Naive thymus-derived CD4-positive, alpha-beta T cell (primary cell): ENCODE measurements at regions of chr7 and their contacts with region 1.

Region 1: GRCh38 chr7:123748734-123749536 is at the start of gene WASL:
- DNase-seq: peak; percentile 82 to 93 (median 89)
- ATAC-seq: peak; percentile 92
- H3K4me3 ChIP-seq: peak within 1 kb of the TSS; percentile 86
- H3K4me3 Mint-ChIP-seq: peak within 1 kb of the TSS; percentile 91 to 99 (median 94)
- H3K27ac ChIP-seq: peak within 1 kb of the TSS; percentile 92
- H3K27ac Mint-ChIP-seq: peak within 1 kb of the TSS; percentile 85 to 97 (median 93)
- H3K4me1 ChIP-seq: peaks cover 18 to 26% of the 10 kb centered on the region in 2 donors
- H3K4me1 Mint-ChIP-seq: peaks cover 44 to 76% (median 69%) of the 10 kb centered on the region in 7 donors
- H3K27me3 ChIP-seq: no peaks in the 10 kb centered on the region
- H3K27me3 Mint-ChIP-seq: peaks cover 0 to 9% (median 0%) of the 10 kb centered on the region in 5 donors
- total RNA-seq, gene WASL: 8.3 to 15.0 (median 10.1) TPM

Region 2: DNA sequence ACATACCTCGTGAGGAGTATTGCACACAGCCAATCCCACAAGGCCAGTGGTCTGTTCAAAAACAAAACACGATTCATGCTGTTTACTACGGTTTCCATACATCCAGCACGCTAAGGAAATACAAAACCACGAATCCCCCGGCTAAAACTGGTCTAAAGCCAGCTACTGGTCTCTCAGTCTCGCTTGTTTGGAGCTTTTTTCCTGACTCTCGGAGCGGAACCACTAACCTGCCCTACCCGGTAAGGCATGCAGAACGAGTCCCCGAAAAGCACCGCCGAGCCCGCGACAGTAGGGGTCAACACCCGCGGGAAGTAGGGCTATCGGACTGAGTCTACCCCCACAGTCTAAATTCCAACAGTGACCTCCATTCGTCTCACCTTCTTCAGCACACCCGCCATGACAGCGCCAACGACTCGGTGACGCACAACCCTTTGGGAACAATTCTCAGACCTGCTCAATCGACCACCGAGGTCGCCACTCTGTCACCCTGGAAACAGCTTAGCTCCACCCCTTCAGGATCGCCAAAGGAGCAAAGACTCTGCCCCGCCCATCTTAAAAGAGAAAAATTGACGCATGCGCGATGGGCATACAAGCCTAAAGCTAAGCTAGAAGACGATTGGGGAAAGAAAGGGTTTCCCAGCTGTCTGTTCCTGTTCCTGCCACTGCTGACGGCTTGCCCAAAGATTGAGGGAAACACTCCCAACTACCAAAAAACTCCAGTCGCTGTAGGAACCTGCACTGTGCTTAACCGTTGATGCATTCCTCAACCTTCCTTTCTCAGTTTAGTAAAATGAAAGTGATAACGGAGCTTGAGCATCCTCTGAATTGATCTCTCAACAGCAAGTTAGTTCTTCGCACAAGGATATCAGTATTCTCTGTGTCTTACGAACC is 191.3 kb before region 1 on chr7 and contains the start of gene NDUFA5:
- CTCF ChIA-PET with region 1: no interaction called
- POLR2A ChIA-PET with region 1: interaction called, 17 read pairs
- intact Hi-C with region 1: loop called (anchors 1 kb)
- DNase-seq: peak; percentile 78 to 99 (median 98)
- ATAC-seq: peak; percentile 100
- H3K4me3 ChIP-seq: peak within 1 kb of the TSS; percentile 95
- H3K4me3 Mint-ChIP-seq: no peak within 1 kb of the TSS
- H3K27ac ChIP-seq: peak within 1 kb of the TSS; percentile 90
- H3K27ac Mint-ChIP-seq: no peak within 1 kb of the TSS
- H3K4me1 ChIP-seq: peaks cover 13 to 15% of the 10 kb centered on the region in 2 donors
- H3K4me1 Mint-ChIP-seq: peaks cover 3 to 16% (median 12%) of the 10 kb centered on the region in 7 donors
- H3K27me3 ChIP-seq: no peaks in the 10 kb centered on the region
- H3K27me3 Mint-ChIP-seq: peaks cover 0 to 6% (median 5%) of the 10 kb centered on the region in 5 donors
- total RNA-seq, gene NDUFA5: 51.2 to 64.1 (median 62.5) TPM

Region 3: DNA sequence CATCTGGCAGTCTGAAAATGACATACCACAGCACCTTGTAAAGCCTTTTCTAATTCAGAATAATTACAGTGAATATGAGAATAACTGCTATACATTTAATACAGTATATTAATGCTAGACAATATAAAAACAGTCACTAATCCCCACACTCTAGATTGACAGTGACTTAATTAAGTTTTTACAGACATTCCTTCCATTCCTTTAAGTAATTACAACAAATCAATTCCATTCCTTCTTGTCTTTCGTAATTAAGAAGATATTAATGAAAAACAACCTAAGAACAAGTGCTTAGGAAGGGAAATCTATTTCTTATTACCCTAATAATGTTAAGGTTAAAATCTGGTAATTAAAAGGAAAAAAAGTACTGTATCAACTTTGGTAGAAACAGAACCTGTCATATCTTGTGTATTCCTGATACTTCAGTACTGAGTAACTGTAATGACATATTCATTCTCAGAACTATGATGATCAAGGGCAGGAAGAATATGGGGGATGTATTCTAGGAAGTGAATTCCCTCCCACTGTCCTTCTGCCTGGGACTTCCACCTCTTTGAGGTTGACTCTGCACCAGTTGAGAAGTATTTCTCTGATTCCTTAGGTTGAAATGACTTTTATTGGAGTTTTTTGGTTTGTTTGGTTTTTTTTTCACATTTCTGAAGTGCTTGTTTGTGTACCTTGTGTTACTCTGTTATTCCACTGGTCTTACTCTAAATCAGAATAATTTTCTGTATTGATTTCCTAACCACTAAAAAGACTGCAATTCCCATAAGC is 37.2 kb before region 1 on chr7:
- CTCF ChIA-PET with region 1: no interaction called
- POLR2A ChIA-PET with region 1: no interaction called
- intact Hi-C with region 1: loop called in 1 of 2 experiments (anchors 2 kb)
- DNase-seq: no peak
- ATAC-seq: no peak
- H3K4me3 ChIP-seq: no peak overlapping the region
- H3K4me3 Mint-ChIP-seq: peak overlapping the region in 7 of 10 donors; percentile 1 to 81 (median 37)
- H3K27ac ChIP-seq: no peak overlapping the region
- H3K27ac Mint-ChIP-seq: peak overlapping the region in 6 of 9 donors; percentile 3 to 82 (median 36)
- H3K4me1 ChIP-seq: peaks cover 0 to 27% of the 10 kb centered on the region in 2 donors
- H3K4me1 Mint-ChIP-seq: peaks cover 34 to 63% (median 60%) of the 10 kb centered on the region in 7 donors
- H3K27me3 ChIP-seq: no peaks in the 10 kb centered on the region
- H3K27me3 Mint-ChIP-seq: no peaks in the 10 kb centered on the region

Region 4: DNA sequence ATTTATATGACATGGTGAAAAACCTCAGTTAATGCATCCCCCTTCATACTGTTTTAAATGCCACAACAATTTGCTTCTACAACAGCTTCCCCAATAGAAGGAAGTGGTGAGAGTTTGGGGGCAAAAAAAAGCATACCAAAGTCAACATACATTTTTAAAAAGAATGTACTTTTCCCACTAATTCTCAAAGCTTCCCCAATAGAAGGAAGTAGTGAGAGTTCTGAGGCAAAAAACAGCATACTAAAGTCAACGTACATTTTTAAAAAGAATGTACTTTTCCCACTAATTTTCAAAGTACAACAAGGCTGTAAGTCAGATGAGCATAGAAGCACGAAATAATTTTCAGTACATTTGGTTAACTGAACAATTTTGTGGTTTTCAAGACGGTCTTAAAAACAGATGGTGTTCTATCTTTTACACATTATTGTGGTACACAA is 24.1 kb before region 1 on chr7:
- CTCF ChIA-PET with region 1: interaction called, 3 read pairs
- POLR2A ChIA-PET with region 1: interaction called, 4 read pairs
- intact Hi-C with region 1: loop called (anchors 2 kb)
- DNase-seq: no peak
- ATAC-seq: no peak
- H3K4me3 ChIP-seq: no peak overlapping the region
- H3K4me3 Mint-ChIP-seq: peak overlapping the region in 3 of 10 donors; percentile 18 to 48 (median 27)
- H3K27ac ChIP-seq: no peak overlapping the region
- H3K27ac Mint-ChIP-seq: no peak overlapping the region
- H3K4me1 ChIP-seq: peaks cover 12 to 18% of the 10 kb centered on the region in 2 donors
- H3K4me1 Mint-ChIP-seq: peaks cover 21 to 91% (median 74%) of the 10 kb centered on the region in 7 donors
- H3K27me3 ChIP-seq: no peaks in the 10 kb centered on the region
- H3K27me3 Mint-ChIP-seq: no peaks in the 10 kb centered on the region

Region 5: DNA sequence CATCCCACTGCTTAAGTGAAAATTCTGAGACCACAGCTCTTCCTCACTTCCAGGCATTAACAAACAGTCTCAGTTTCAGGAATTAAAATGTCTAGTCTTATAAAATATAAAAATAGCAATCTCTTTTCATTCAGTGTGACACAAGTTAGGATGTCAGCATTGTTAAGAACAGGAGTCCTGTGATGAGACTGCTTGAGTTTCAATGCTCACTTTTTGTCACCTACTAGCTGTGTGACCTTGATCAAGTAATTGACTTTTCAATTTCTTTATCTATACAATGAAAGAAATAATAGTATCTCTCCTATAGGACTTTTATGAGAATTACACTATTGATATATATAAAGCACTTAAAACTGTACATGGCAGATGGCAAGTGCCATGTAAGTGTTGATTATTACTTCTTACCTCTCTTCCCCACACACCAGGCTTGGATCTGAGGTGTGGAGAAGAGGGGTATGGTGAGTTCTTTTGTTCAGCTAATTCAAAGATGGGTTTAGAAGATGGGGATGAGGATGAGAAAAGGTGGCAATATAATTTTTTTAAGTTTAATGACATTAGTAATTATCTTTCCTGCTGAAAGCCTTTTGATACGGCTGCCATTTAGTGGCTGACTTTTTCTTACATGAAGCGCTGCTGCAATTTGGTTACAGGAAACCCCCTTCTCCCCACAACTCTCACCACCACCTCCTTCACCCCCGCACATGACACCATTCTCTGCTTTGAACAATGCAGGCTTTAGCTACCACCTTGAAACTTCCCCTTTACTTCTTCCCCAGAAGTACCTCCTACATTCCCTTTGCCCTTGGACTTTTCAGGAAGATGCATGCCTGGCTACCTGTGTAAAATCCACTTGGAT is 75.2 kb after region 1 on chr7:
- CTCF ChIA-PET with region 1: no interaction called
- POLR2A ChIA-PET with region 1: no interaction called
- intact Hi-C with region 1: loop called in 1 of 2 experiments (anchors 5 kb)
- DNase-seq: peak in 8 of 9 donors; percentile 2 to 63 (median 18)
- ATAC-seq: peak; percentile 67
- H3K4me3 ChIP-seq: no peak overlapping the region
- H3K4me3 Mint-ChIP-seq: peak overlapping the region in 8 of 10 donors; percentile 8 to 58 (median 45)
- H3K27ac ChIP-seq: no peak overlapping the region
- H3K27ac Mint-ChIP-seq: no peak overlapping the region
- H3K4me1 ChIP-seq: peaks cover 0 to 10% of the 10 kb centered on the region in 2 donors
- H3K4me1 Mint-ChIP-seq: peaks cover 9 to 15% (median 13%) of the 10 kb centered on the region in 7 donors
- H3K27me3 ChIP-seq: no peaks in the 10 kb centered on the region
- H3K27me3 Mint-ChIP-seq: peaks cover 0 to 12% (median 6%) of the 10 kb centered on the region in 5 donors

Region 6: DNA sequence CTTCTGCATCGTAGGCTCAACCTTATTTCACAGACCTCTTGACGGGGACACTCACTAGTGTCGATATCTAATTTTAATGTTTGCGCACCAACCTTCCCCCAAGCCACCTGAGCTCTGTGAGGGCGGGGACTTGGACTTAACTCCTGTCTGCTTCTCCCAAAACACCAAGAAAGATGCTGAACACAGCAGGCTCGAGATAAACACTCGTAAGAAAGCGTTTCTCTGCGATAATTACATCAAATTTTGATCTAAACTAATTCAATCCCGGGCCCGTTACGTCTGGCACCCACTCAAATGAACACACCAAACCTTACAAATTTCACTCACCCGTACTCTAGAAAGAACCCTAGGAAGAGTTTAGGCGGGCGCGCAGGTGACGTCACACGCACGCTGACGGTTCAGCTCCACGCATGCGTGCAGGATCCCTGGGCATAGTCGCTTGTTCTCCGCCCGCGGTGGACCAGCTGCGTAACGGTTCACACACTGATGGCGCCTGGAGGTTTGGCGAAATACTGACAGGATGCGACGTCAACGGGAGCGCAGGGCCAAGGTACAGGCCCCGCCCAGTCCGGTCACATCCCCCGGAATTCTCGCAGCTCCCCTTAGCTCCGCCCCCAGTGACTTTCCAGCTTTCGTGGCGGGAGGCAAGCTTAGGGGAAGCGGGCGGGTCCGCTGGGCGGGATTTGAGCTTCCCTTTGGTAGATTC is 1180.7 kb after region 1 on chr7 and contains the start of gene POT1:
- CTCF ChIA-PET with region 1: no interaction called
- POLR2A ChIA-PET with region 1: interaction called, 3 read pairs
- intact Hi-C with region 1: loop called (anchors 1 to 5 kb)
- DNase-seq: peak; percentile 88 to 94 (median 92)
- ATAC-seq: peak; percentile 99
- H3K4me3 ChIP-seq: peak within 1 kb of the TSS; percentile 68
- H3K4me3 Mint-ChIP-seq: peak within 1 kb of the TSS; percentile 92 to 99 (median 94)
- H3K27ac ChIP-seq: peak within 1 kb of the TSS; percentile 83
- H3K27ac Mint-ChIP-seq: peak within 1 kb of the TSS; percentile 92 to 98 (median 98)
- H3K4me1 ChIP-seq: peaks cover 9 to 10% of the 10 kb centered on the region in 2 donors
- H3K4me1 Mint-ChIP-seq: peaks cover 27 to 58% (median 51%) of the 10 kb centered on the region in 7 donors
- H3K27me3 ChIP-seq: no peaks in the 10 kb centered on the region
- H3K27me3 Mint-ChIP-seq: peaks cover 0 to 10% (median 0%) of the 10 kb centered on the region in 5 donors
- total RNA-seq, gene POT1: 13.1 to 33.8 (median 28.6) TPM